Activated T-helper 1 cell treated with anti-CD3 and anti-CD28 coated beads, Interleukin-12 subunit alpha, Interleukin-12 subunit beta, Interleukin-2, Interleukin-4 antibody, amounts not matched to agents 30 ng/mL and 10 ng/mL and 1 ng/mL, durations not matched to agents 14 hours and 24 hours and 36 hours (primary cell): ENCODE measurements at regions of chr12 and their contacts with region 1.

Region 1: GRCh38 chr12:31659087-31659933 is at the start of gene ETFBKMT:
- DNase-seq: peak; percentile 95
- H3K4me3 Mint-ChIP-seq: peak within 1 kb of the TSS; percentile 94
- H3K27ac Mint-ChIP-seq: peak within 1 kb of the TSS; percentile 97
- H3K4me1 Mint-ChIP-seq: peaks cover 11% of the 10 kb centered on the region
- H3K27me3 Mint-ChIP-seq: no peaks in the 10 kb centered on the region
- total RNA-seq, gene ETFBKMT: 0.62 and 0.69 TPM in 2 replicates

Region 2: GRCh38 chr12:31456562-31456961 is 202.7 kb before region 1 on chr12:
- intact Hi-C with region 1: no loop called
- DNase-seq: no peak
- H3K4me3 Mint-ChIP-seq: no peak overlapping the region
- H3K27ac Mint-ChIP-seq: no peak overlapping the region
- H3K4me1 Mint-ChIP-seq: no peaks in the 10 kb centered on the region
- H3K27me3 Mint-ChIP-seq: peaks cover 2% of the 10 kb centered on the region

Region 3: GRCh38 chr12:31728917-31729640 is 69.8 kb after region 1 on chr12 and contains the start of gene AMN1:
- intact Hi-C with region 1: loop called (anchors 1 kb)
- DNase-seq: peak; percentile 100
- H3K4me3 Mint-ChIP-seq: peak within 1 kb of the TSS; percentile 98
- H3K27ac Mint-ChIP-seq: peak within 1 kb of the TSS; percentile 99
- H3K4me1 Mint-ChIP-seq: peaks cover 53% of the 10 kb centered on the region
- H3K27me3 Mint-ChIP-seq: no peaks in the 10 kb centered on the region
- total RNA-seq, gene AMN1: 3.1 and 3.4 TPM in 2 replicates

Region 4: DNA sequence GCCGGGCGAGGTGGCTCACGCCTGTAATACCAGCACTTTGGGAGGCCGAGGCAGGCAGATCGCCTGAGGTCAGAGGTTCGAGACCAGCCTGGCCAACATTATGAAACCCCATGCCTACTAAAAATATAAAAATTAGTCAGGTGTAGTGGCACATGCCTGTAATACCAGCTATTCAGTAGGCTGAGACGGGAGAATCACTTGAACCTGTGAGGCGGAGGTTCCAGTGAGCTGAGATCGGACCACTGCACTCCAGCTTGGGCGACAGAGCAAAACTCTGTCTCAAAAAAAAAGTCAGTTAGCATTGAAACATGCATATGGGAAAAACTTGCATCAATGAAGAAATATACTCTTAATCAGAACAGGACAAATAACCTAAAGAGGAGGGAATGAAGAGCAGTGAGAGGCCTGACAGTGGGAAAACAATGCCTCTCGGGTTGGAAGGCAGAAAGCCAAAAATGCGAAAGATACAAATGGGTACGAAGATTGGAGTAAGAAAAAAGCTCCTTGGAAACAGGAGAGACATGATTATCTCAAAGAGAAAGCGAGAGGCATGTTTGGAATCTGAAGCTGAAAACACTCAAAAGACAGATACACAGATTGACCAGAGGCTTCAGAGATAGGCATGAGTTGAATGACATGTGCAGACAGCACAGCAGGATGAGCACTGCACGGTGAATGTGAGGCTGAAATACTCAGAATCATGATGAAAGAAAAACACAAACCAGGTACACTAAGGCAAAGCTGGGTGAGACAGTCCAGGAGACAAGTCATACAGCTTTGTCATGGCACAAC is 330.5 kb after region 1 on chr12:
- intact Hi-C with region 1: loop called (anchors 1 kb)
- DNase-seq: no peak
- H3K4me3 Mint-ChIP-seq: peak overlapping the region; percentile 54
- H3K27ac Mint-ChIP-seq: peak overlapping the region; percentile 81
- H3K4me1 Mint-ChIP-seq: peaks cover 63% of the 10 kb centered on the region
- H3K27me3 Mint-ChIP-seq: no peaks in the 10 kb centered on the region

Region 5: DNA sequence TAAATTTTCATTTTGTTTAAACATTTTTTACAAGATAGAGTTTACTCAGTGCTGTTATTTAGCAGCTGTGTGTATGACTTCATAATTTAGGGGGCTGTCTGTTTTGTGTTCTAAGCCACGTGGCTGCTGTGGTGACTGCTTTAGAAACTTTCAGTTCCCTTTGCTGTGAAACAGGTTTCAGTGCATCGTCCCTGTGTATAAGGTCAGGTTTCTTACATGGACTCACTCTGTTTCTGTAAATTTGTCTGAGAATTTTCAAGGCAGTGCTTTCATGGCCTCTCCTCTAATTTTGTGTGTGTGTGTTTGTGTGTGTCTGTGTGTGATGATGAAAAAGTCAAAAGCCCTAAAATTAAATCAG is 479.7 kb after region 1 on chr12:
- intact Hi-C with region 1: loop called (anchors 2 kb)
- DNase-seq: peak; percentile 20
- H3K4me3 Mint-ChIP-seq: peak overlapping the region; percentile 70
- H3K27ac Mint-ChIP-seq: peak overlapping the region; percentile 4
- H3K4me1 Mint-ChIP-seq: peaks cover 39% of the 10 kb centered on the region
- H3K27me3 Mint-ChIP-seq: peaks cover 11% of the 10 kb centered on the region

Region 6: DNA sequence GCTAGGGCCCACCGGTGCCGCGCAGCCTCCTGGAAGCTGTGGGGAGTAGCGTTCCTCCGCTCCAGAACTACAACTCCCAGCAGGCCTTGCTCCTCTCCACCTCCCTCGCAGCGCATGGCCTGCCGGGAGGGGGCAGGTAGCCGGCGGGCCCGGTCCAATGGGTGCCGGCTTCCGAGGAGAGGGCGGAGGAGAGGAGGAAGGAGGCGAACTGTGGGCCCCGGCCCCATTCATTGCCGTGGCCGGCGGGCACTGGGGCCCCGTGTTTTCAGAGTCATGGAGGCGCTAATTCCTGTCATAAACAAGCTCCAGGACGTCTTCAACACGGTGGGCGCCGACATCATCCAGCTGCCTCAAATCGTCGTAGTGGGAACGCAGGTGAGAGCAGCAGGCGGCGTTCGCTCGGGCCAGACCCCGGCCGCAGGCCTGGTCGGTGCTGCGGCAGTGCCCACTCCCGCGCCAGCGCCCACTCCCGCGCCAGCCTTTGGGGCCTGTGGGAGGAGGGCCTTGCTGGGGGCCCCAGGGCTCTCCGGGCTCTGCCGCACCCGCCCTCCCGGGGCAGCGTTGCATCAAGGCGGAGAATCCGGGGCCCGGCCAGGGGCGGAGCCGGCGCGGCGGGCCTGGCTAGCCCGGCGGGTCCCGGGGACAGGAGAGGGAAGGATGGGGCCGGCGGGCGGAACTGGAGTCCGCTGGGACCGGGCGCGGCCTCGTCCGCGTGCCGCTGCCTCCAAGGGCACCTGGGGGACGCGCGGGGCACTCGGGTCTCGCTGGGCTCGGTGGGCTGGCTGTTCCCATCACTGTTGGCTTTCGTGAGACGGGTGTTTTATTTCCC is 1020.0 kb after region 1 on chr12 and contains the start of gene DNM1L:
- intact Hi-C with region 1: loop called (anchors 1 kb)
- DNase-seq: peak; percentile 90
- H3K4me3 Mint-ChIP-seq: peak within 1 kb of the TSS; percentile 95
- H3K27ac Mint-ChIP-seq: peak within 1 kb of the TSS; percentile 92
- H3K4me1 Mint-ChIP-seq: peaks cover 35% of the 10 kb centered on the region
- H3K27me3 Mint-ChIP-seq: no peaks in the 10 kb centered on the region
- total RNA-seq, gene DNM1L: 87.0 and 91.9 TPM in 2 replicates